Calu3 (cell line): ENCODE measurements at regions of chr1 and their contacts with region 1.

Region 1: DNA sequence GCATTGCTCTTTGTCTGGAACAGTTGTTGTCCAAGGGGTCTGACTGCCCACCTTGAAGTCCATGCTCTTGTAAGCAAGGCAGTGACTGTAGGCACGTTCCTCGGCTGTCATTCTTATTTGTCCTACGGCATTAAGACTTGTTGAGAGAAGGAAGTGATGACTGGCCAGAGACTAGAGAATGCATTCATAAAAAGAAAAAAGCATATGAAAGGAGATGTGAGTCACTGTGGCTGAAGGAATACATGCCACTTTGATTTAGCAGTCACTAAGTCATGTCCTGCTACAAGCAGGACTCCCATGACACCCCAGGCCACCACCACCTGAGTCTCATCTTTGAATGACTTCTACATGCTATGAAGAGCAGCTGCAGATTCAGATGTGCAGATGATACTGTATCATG is 50.5 kb downstream of the CNN3 start:
- DNase-seq: no peak
- H3K4me3 Mint-ChIP-seq: no peak overlapping the region
- H3K27ac Mint-ChIP-seq: no peak overlapping the region
- H3K4me1 Mint-ChIP-seq: no peaks in the 10 kb centered on the region
- H3K27me3 Mint-ChIP-seq: no peaks in the 10 kb centered on the region
- CTCF ChIP-seq: no peak

Region 2: GRCh38 chr1:94417978-94418663 is 458.2 kb before region 1 on chr1 and contains the start of gene ABCD3:
- CTCF ChIA-PET with region 1: no interaction called
- intact Hi-C with region 1: no loop called
- DNase-seq: peak; percentile 97
- H3K4me3 Mint-ChIP-seq: no peak within 1 kb of the TSS
- H3K27ac Mint-ChIP-seq: no peak within 1 kb of the TSS
- H3K4me1 Mint-ChIP-seq: peaks cover 44% of the 10 kb centered on the region
- H3K27me3 Mint-ChIP-seq: no peaks in the 10 kb centered on the region
- CTCF ChIP-seq: no peak
- total RNA-seq, gene ABCD3: 51.0 and 59.3 TPM in 2 replicates

Region 3: DNA sequence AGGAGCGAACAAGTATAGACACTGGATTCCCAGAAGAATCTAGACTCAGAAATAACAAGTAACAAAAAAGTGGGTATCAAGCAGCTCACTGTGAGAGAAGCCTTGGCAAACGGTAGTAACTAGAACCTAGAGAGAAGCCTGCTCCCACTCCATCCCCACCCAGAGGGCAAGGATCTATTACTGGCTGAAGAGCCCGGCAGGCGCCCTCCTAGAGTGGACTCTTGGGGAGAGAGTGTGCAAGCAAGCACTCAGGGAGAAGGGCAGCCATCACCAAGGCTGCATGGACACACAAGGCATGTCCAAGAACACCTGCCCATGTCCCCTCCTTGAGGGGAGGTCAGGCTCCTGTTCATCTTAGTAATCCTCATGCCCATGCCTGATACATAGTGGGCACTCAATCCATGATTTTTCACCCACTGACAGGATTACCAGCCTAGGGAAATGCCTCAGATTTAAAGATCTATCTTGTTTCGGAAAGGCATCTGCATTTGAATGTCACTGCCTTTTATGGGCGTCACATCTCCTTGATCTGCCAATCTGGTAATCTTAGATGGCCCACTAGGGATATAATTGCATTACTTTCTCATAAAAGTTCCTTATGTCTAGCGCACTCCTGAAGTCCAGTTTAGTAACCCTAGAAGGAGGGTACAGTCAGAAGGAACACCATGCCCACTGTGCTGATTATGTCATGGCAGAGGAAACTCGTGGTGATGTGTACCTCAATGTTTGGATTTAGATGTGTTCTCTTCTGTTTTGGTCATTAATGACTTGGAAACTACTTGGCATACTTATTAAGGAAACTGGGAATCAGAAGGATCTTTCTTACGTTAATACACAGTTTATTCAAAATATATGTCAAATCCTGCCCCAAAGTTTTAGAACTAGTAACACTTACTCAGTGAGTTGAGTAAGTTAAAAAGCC is 36.2 kb after region 1 on chr1:
- CTCF ChIA-PET with region 1: no interaction called
- intact Hi-C with region 1: loop called (anchors 5 kb)
- DNase-seq: no peak
- H3K4me3 Mint-ChIP-seq: no peak overlapping the region
- H3K27ac Mint-ChIP-seq: no peak overlapping the region
- H3K4me1 Mint-ChIP-seq: peaks cover 30% of the 10 kb centered on the region
- H3K27me3 Mint-ChIP-seq: no peaks in the 10 kb centered on the region
- CTCF ChIP-seq: no peak

Region 4: GRCh38 chr1:94993931-94994645 is 117.7 kb after region 1 on chr1:
- CTCF ChIA-PET with region 1: no interaction called
- intact Hi-C with region 1: no loop called
- DNase-seq: no peak
- H3K4me3 Mint-ChIP-seq: no peak overlapping the region
- H3K27ac Mint-ChIP-seq: no peak overlapping the region
- H3K4me1 Mint-ChIP-seq: no peaks in the 10 kb centered on the region
- H3K27me3 Mint-ChIP-seq: no peaks in the 10 kb centered on the region
- CTCF ChIP-seq: no peak